Posterior cingulate gyrus (tissue), 11 donors: ENCODE measurements at regions of chr15 and their contacts with region 1.

Region 1: GRCh38 chr15:71743861-71744382 is 66.4 kb upstream of the NR2E3 start:
- DNase-seq: peak in 3 of 10 donors; percentile 27 to 54 (median 34)

Region 2: DNA sequence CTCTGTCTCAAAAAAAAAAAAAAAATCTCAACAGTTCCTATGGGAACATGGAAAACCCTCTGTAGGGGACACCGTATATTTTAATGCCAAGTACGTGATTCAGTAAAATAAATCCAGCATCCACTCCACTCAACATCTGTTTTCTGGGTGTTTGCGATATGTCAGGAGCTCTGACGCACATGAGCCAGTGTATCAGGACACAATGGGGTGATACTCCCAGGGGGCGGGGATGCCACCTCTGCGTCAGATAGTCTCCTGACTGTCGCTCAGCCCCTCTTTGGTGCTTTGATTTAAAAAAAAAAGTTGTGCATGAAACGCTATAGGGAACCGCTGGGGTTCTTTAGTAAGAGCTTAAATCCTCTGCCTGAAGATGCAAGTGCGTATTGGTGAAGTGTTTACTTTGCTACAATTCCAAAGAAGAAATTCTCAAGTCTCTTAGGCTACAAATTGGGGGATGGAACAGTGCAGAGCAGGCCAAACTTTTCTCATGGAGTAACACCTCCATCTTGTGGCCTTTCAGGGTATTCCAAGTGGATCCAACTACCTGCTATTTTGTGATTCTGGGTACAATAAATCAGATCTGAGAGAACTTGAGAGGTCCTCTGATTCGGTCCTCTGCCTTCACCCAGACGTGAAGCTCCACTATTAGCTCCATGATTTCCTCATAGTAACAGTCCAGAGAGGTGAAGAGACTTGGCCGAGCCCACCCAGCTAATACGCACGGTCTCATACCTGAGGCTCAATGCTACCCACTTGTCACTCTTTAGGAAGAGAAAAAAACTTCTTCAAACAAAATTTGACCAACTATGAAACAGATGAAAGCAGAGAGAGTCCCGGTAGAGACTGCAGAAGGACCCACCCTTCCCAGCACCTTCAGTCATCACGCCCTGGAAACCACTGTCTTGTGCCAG is 57.2 kb after region 1 on chr15:
- intact Hi-C with region 1: loop called (anchors 5 kb)
- DNase-seq: peak in 3 of 10 donors; percentile 28 to 71 (median 39)

Region 3: GRCh38 chr15:72155635-72156616 is 412.0 kb after region 1 on chr15:
- intact Hi-C with region 1: loop called (anchors 2 kb)
- DNase-seq: peak; percentile 78 to 97 (median 91)